Common myeloid progenitor, CD34-positive (primary cell): ENCODE measurements at regions of chr14 and their contacts with region 1.

Region 1: DNA sequence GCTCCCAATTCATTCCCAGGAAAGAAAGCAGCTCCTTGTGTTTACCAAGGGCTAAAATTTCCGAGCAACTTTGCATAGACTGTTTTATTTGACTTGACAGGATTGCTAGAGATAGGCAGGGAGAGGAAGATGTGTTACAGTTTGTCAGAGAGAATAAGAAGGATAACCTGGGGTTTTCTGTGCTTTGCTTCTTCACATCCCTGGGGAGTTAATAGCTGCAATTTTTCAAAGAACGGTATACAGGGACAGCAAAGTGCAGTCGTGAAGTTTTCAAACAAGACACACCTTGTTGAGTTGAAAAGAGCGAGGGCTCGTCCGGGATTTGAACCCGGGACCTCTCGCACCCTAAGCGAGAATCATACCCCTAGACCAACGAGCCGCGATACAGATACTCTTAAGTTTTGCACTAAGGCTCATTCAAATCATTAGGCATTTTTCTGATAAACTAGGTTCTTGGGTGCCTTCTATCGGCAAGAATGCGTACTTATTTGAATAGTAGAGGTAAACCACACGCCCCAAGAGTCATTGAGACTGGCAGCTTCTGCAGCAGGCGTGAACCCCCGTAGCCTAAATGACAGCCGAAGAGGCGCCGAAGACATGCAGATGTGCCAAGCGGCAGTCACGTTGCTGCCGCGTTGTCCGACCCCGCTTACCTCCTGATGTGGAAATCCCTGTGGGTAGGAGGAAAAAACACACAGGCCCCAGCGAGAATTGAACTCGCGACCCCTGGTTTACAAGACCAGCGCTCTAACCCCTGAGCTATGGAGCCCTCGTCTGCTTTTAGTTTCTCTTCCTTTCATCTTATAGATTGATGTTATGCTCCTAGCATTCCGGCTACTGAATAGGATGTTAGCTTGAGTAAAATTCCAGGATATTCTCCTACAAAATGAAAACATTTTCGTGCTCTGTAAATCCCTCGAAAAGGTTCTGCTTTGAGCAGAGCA is 22.2 kb upstream of the RNASE12 start:
- DNase-seq: peak; percentile 95 to 99 (median 98)
- H3K4me3 ChIP-seq: peak overlapping the region; percentile 49 to 90 (median 76)
- H3K27ac ChIP-seq: peak overlapping the region in 1 of 2 experiments; percentile 49
- H3K4me1 ChIP-seq: peaks cover 5 to 49% (median 22%) of the 10 kb centered on the region in 4 experiments
- H3K27me3 ChIP-seq: no peaks in the 10 kb centered on the region

Region 2: DNA sequence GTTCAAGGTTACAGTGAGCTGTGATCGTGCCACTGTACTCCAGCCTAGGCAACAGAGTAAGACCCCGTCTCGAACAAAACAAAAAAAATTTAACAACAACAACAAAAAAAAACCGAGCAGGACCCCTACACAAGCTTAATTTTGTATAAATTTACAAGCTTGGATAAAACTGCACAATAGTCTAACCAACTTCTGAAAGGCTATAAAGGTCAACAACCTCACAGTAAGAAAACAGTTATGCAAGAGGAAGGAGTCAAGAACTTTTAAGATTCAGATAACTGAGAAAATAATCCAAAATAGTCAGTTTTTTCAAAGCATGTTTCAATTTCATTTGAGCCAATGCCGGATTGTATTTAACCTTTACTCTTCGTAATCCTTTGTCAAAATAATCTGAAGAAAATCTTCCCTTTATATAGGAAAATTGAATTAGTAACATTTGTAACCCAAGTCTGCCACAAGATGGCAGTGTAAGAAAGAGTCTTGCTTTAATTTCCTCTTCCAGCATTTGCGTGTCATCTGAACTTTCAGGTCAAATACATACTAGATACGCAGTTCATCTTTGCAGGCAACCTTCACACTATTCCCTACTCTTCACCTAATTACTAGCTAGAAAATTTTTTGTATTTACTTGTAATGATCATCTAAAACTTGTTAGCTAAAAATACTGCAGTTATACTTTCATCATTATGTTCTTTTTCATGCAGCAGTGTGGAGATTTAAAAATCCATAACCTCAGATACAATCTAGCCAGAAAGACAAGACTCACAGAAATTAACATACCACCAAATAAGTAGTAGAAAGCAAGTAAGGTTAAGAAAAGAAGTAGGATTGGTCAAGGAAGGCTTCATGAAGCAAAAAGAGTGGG is 286.1 kb before region 1 on chr14:
- CTCF ChIA-PET with region 1: interaction called, 91 read pairs
- POLR2A ChIA-PET with region 1: no interaction called
- DNase-seq: peak; percentile 73 to 77 (median 75)
- H3K4me3 ChIP-seq: no peak overlapping the region
- H3K27ac ChIP-seq: no peak overlapping the region
- H3K4me1 ChIP-seq: peaks cover under 1 to 15% (median 4%) of the 10 kb centered on the region in 4 experiments
- H3K27me3 ChIP-seq: no peaks in the 10 kb centered on the region

Region 3: DNA sequence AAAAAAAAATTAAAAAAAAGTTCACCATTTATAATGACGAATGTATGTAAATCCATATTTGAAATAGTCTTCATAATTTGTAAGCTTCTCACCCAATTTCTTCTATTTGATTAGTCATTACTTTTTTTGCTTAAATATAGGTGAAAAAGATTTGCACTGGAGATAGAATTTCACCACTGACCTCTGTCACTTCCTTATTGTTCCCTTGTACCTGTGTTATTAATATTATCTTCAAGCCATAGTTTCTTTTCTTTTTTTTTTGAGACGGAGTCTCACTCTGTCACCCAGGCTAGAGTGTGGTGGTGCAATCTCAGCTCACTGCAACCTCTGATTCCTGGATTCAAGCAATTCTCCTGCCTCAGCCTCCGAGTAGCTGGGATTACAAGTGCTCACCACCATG is 215.9 kb before region 1 on chr14:
- CTCF ChIA-PET with region 1: no interaction called
- POLR2A ChIA-PET with region 1: no interaction called
- DNase-seq: no peak
- H3K4me3 ChIP-seq: no peak overlapping the region
- H3K27ac ChIP-seq: no peak overlapping the region
- H3K4me1 ChIP-seq: no peaks in the 10 kb centered on the region
- H3K27me3 ChIP-seq: no peaks in the 10 kb centered on the region

Region 4: DNA sequence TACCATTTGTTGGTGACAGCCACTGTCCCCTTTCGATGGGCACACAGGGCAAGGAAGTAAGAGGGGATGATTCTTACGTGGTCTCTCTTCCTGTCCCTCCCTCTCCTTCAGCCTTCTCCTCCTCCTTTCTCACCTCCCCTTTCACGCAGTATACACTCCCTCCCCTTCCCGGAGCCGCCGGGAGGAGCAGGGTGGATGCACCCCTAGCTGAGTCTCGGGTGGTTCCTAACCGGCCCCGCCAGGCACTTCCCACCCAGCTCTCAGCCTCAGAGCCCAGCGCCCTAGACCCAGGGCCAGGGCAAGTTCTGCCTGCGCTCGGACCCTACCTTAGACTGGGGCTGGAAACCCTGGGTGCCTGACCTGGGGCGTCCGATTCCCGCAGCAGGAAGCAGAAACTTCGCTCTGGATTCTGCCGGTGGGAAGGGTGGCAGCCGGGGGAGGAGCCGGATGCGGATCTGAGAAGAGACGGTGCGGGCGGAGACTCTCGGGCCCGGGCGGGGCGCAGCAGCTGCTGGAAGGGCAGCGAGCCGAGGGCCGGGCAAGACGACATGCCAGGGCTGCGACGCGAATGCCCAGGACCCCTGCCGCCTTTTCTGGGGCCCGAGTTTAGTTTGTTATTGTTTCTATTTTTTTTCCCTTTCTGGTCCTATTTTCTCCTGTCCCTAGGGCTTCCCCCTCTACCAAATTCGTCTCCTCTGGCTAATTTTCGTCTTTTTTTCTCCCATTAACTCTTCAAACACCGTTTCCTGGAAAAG is 200.1 kb before region 1 on chr14 and contains the start of gene TEP1:
- CTCF ChIA-PET with region 1: interaction called, 34 read pairs
- POLR2A ChIA-PET with region 1: interaction called, 3 read pairs
- DNase-seq: peak; percentile 55 to 71 (median 58)
- H3K4me3 ChIP-seq: peak within 1 kb of the TSS; percentile 80 to 97 (median 92)
- H3K27ac ChIP-seq: peak within 1 kb of the TSS; percentile 46 to 82
- H3K4me1 ChIP-seq: peaks cover 11 to 33% (median 24%) of the 10 kb centered on the region in 4 experiments
- H3K27me3 ChIP-seq: no peaks in the 10 kb centered on the region

Region 5: GRCh38 chr14:20592574-20592973 is 20.8 kb before region 1 on chr14:
- CTCF ChIA-PET with region 1: no interaction called
- POLR2A ChIA-PET with region 1: no interaction called
- DNase-seq: peak in 1 of 3 donors; percentile 45
- H3K4me3 ChIP-seq: peak overlapping the region in 1 of 7 experiments; percentile 14
- H3K27ac ChIP-seq: no peak overlapping the region
- H3K4me1 ChIP-seq: peaks cover 0 to 11% (median 7%) of the 10 kb centered on the region in 4 experiments
- H3K27me3 ChIP-seq: no peaks in the 10 kb centered on the region

Region 6: DNA sequence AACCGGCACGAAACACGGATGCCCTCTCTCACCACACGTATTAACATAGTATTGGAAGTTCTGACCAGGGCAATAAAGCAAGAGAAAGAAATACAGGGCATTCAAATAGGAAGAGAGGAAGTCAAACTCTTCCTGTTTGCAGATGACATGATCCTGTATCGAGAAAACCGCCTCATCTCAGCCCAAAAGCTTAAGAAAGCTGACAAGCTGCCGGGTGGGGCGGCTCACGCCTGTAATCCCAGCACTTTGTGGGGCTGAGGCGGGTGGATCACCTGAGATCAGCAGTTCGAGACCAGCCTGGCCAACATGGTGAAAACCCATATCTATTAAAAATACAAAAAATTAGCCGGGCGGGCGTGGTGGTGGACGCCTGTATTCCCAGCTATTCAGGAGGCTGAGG is 10.4 kb after region 1 on chr14:
- CTCF ChIA-PET with region 1: interaction called, 37 read pairs
- POLR2A ChIA-PET with region 1: interaction called, 3 read pairs
- DNase-seq: peak in 1 of 3 donors; percentile 38
- H3K4me3 ChIP-seq: peak overlapping the region in 2 of 7 experiments; percentile 32 to 41
- H3K27ac ChIP-seq: no peak overlapping the region
- H3K4me1 ChIP-seq: peaks cover 11 to 36% (median 31%) of the 10 kb centered on the region in 4 experiments
- H3K27me3 ChIP-seq: peaks cover 0 to 34% (median 17%) of the 10 kb centered on the region in 5 experiments

Region 7: GRCh38 chr14:20690848-20691523 is 77.6 kb after region 1 on chr14:
- CTCF ChIA-PET with region 1: interaction called, 12 read pairs
- POLR2A ChIA-PET with region 1: interaction called, 3 read pairs
- DNase-seq: peak; percentile 75 to 85 (median 82)
- H3K4me3 ChIP-seq: no peak overlapping the region
- H3K27ac ChIP-seq: no peak overlapping the region
- H3K4me1 ChIP-seq: no peaks in the 10 kb centered on the region
- H3K27me3 ChIP-seq: no peaks in the 10 kb centered on the region

Region 8: GRCh38 chr14:20734430-20734806 is 121.1 kb after region 1 on chr14:
- CTCF ChIA-PET with region 1: no interaction called
- POLR2A ChIA-PET with region 1: no interaction called
- DNase-seq: no peak
- H3K4me3 ChIP-seq: no peak overlapping the region
- H3K27ac ChIP-seq: no peak overlapping the region
- H3K4me1 ChIP-seq: no peaks in the 10 kb centered on the region
- H3K27me3 ChIP-seq: no peaks in the 10 kb centered on the region